ENCODE measurements at regions of chr16 and their contacts with region 1.

Region 1: GRCh38 chr16:24516900-24517669 is 22.3 kb upstream of the RBBP6 start:
- DNase-seq: peak; percentile 46 to 85
- ATAC-seq: peak; percentile 73 to 87 (median 82)
- H3K4me3 ChIP-seq: peak overlapping the region in 5 of 10 donors; percentile 2 to 34 (median 21)
- H3K27ac ChIP-seq: no peak overlapping the region
- H3K4me1 ChIP-seq: no peaks in the 10 kb centered on the region
- H3K27me3 ChIP-seq: no peaks in the 10 kb centered on the region
- CTCF ChIP-seq: peak; percentile 75 to 94 (median 88)

Region 2: GRCh38 chr16:24689145-24689544 is 172.1 kb after region 1 on chr16:
- intact Hi-C with region 1: loop called in 1 of 10 experiments (anchors 10 kb)
- DNase-seq: no peak
- ATAC-seq: peak in 4 of 8 donors; percentile 37 to 72 (median 56)
- H3K4me3 ChIP-seq: no peak overlapping the region
- H3K27ac ChIP-seq: no peak overlapping the region
- H3K4me1 ChIP-seq: peaks cover 0 to 16% (median 8%) of the 10 kb centered on the region in 9 donors
- H3K27me3 ChIP-seq: no peaks in the 10 kb centered on the region
- CTCF ChIP-seq: peak; percentile 18 to 69 (median 55)

Measured in heart right ventricle (tissue), 16 donors.